PC-9 (cell line): ENCODE measurements at regions of chr9 and their contacts with region 1.

Region 1: GRCh38 chr9:130946778-130947617 is 8.0 kb upstream of the FIBCD1 start:
- DNase-seq: peak; percentile 66 to 67
- H3K4me3 ChIP-seq: peak overlapping the region; percentile 27; the same call in 1 of the 2 replicates
- H3K27ac ChIP-seq: no peak overlapping the region
- H3K4me1 ChIP-seq: peaks cover 16% of the 10 kb centered on the region
- H3K27me3 ChIP-seq: peaks cover 8% of the 10 kb centered on the region; the same call in 1 of the 2 replicates
- CTCF ChIP-seq: no peak

Region 2: DNA sequence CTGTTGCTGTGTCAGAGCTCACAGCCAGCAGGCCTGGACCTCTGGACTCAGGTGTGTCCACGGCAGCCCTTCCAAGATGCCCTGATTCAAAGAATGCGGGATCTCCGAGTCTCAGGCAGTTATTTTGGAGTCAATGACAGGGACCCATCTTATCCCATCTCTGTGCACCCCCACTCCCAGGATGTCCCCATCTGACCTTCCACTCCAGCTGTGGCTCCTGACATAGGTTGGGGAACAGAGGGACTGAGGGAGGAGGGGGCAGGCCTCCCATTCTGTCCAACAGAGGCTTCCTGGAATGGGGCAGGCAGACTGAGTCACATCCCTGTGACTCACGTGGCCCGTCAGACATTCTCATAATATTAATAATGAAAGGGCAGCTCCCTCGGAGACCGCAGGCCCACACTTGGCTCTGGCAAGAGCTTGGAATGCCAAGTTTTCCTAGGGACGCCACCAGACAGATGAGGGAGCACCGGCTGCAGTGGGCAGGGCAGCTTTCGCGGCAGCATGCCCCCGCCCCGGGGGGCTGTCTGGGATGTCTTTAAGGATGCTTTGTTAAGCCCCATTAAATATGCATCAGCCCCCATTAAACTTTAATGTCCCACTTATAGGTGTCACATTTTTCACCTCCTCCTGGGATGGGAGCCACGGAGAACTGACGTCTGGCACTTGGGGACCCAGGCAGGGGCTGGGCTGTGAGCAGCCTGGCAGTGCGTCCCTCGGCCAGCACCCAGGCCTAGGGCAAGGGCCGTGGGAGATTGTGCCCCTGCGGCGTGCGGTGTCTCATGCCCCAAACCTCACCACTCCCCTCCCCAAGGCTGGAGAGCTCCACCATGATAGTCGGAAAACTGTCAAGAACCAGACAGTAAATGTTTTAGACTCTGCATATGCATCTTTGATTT is 15.7 kb after region 1 on chr9:
- CTCF ChIA-PET with region 1: interaction called, 5 read pairs
- POLR2A ChIA-PET with region 1: no interaction called
- intact Hi-C with region 1: loop called (anchors 1 kb)
- DNase-seq: peak; percentile 84 to 88
- H3K4me3 ChIP-seq: no peak overlapping the region
- H3K27ac ChIP-seq: no peak overlapping the region
- H3K4me1 ChIP-seq: peaks cover 21% of the 10 kb centered on the region
- H3K27me3 ChIP-seq: peaks cover 6% of the 10 kb centered on the region; the same call in 1 of the 2 replicates
- CTCF ChIP-seq: no peak